ENCODE measurements at regions of chr3 and their contacts with region 1.

Region 1: DNA sequence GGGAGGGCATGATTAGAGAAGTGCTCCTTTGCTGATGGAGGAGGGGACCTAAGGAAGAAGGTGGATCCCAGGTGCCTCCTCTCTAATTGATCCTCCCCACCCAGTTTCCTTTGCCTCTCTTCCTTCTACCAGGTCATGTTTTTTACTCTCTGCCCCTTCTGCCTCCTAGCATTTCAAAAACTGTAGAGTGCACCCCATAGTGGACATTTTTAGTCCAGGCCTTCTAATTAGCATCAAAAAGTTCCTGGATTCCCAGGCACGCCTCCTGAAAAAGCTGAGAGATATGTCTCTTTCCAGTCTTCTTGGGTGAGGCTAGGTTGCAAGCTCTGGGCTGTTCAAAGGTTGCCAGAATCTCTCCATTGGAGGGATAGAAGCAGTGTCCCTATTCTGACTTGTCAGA is 18.7 kb upstream of the ITGB5 start:
- DNase-seq: no peak
- ATAC-seq: no peak; the same call in 1 of the 2 replicates
- H3K4me3 ChIP-seq: no peak overlapping the region
- H3K27ac ChIP-seq: no peak overlapping the region
- H3K4me1 ChIP-seq: no peaks in the 10 kb centered on the region; the same call in 1 of the 2 replicates
- H3K27me3 ChIP-seq: no peaks in the 10 kb centered on the region
- CTCF ChIP-seq: peak; percentile 27; the same call in 1 of the 2 replicates

Region 2: GRCh38 chr3:124044956-124045355 is 860.9 kb before region 1 on chr3:
- CTCF ChIA-PET with region 1: no interaction called
- POLR2A ChIA-PET with region 1: no interaction called
- in situ Hi-C with region 1: no loop called
- intact Hi-C with region 1: no loop called
- DNase-seq: no peak
- ATAC-seq: no peak
- H3K4me3 ChIP-seq: no peak overlapping the region
- H3K27ac ChIP-seq: no peak overlapping the region
- H3K4me1 ChIP-seq: no peaks in the 10 kb centered on the region
- H3K27me3 ChIP-seq: peaks cover 42% of the 10 kb centered on the region
- CTCF ChIP-seq: no peak

Region 3: DNA sequence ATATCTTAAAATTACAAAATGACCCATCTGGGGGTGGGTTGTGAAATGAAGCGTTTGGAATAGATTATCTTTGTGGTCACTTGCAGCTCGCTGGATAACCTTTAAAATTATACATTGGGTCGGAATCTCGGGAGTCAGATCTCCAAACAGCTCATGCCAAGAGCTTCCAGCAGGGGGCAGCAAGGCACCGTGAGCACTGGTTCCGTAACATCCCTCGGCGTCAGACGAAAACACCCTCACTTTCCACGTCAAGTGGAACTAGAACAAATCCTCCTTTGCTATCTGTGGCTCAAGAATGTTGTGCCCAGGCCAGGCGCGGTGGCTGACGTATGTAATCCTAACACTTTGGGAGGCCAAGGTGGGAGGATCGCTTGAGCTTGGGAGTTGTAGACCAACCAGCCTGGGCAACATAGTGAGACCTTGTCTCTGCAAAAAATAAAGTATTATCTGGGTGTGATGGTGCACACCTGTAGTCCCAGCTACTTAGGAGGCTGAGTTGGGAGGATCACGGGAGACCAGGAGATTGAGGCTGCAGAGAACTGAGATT is 144.5 kb before region 1 on chr3:
- CTCF ChIA-PET with region 1: interaction called, 20 read pairs
- POLR2A ChIA-PET with region 1: no interaction called
- in situ Hi-C with region 1: no loop called
- intact Hi-C with region 1: loop called (anchors 1 kb)
- DNase-seq: peak; percentile 70
- ATAC-seq: peak; percentile 77
- H3K4me3 ChIP-seq: 0 out of 4 replicates have a peak overlapping the region, but pooled peaks of 1 of the 2 experiments have one; percentile 12
- H3K27ac ChIP-seq: no peak overlapping the region; the same call in 1 of the 2 replicates
- H3K4me1 ChIP-seq: peaks cover 7% of the 10 kb centered on the region
- H3K27me3 ChIP-seq: no peaks in the 10 kb centered on the region
- CTCF ChIP-seq: peak; percentile 99

Region 4: GRCh38 chr3:124786441-124787241 is 119.2 kb before region 1 on chr3:
- CTCF ChIA-PET with region 1: interaction called, 22 read pairs
- POLR2A ChIA-PET with region 1: no interaction called
- in situ Hi-C with region 1: no loop called
- intact Hi-C with region 1: no loop called
- DNase-seq: no peak
- ATAC-seq: peak; percentile 32
- H3K4me3 ChIP-seq: no peak overlapping the region
- H3K27ac ChIP-seq: peak overlapping the region; percentile 51
- H3K4me1 ChIP-seq: peaks cover 11% of the 10 kb centered on the region
- H3K27me3 ChIP-seq: no peaks in the 10 kb centered on the region
- CTCF ChIP-seq: no peak

Region 5: GRCh38 chr3:125055913-125056745 is 150.3 kb after region 1 on chr3 and contains the start of gene HEG1:
- CTCF ChIA-PET with region 1: no interaction called
- POLR2A ChIA-PET with region 1: no interaction called
- in situ Hi-C with region 1: no loop called
- intact Hi-C with region 1: no loop called
- DNase-seq: no peak
- ATAC-seq: peak; percentile 86
- H3K4me3 ChIP-seq: peak within 1 kb of the TSS; percentile 92 to 94
- H3K27ac ChIP-seq: peak within 1 kb of the TSS; percentile 96
- H3K4me1 ChIP-seq: peaks cover 69% of the 10 kb centered on the region
- H3K27me3 ChIP-seq: no peaks in the 10 kb centered on the region
- CTCF ChIP-seq: no peak; the same call in 1 of the 2 replicates
- total RNA-seq, gene HEG1: 141 TPM

Measured in Panc1 (cell line).